Adrenal gland (tissue), 19 donors: ENCODE measurements at regions of chr2 and their contacts with region 1.

Region 1: DNA sequence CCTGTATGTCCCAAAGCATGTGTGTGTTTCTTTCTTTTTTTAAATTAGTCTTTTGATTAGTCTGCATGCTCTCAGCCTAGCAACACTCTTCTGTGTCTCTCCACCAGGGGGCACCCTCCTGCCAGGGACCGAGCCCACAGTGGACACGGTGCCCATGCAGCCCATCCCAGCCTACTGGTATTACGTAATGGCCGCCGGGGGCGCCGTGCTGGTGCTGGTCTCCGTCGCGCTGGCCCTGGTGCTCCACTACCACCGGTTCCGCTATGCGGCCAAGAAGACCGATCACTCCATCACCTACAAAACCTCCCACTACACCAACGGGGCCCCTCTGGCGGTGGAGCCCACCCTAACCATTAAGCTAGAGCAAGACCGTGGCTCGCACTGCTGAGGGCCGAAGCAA is 93.8 kb downstream of the NRP2 start:
- DNase-seq: peak; percentile 53 to 84 (median 57)
- H3K4me3 ChIP-seq: no peak overlapping the region
- H3K27ac ChIP-seq: no peak overlapping the region
- H3K4me1 ChIP-seq: no peaks in the 10 kb centered on the region
- H3K27me3 ChIP-seq: no peaks in the 10 kb centered on the region
- CTCF ChIP-seq: peak; percentile 61 to 77 (median 67)
- POLR2A ChIP-seq: no peak

Region 2: DNA sequence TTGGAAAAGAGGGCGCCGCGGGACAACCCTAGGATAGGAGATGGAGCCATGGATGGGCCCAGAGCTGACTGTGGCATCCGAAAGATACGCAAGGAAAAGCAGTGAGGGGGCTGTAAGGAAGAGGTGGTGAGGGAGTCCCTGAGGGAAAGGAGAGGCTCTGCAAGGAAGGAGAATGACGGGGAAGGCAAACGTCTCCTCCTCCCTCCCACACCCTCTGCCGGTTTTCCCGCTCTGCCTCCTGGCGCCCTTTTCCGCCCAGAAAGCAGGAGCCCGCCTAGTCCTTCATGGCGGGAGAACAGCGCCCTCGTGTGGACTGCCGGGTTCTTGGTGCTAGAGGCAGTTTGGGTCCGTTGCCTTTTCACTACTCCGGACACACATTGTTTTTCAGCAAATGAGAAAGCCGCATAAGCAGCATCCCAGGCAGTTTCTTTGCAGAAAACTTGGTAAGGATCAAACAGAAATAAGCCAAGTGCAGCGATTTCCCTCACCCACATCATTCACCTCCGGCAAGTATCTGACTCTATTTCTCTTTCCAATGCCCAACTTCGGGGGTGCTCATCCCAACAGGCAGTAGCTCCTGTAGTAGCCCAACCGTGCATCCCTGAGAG is 109.5 kb after region 1 on chr2:
- intact Hi-C with region 1: loop called (anchors 5 kb)
- DNase-seq: peak; percentile 86 to 95 (median 90)
- H3K4me3 ChIP-seq: no peak overlapping the region
- H3K27ac ChIP-seq: no peak overlapping the region
- H3K4me1 ChIP-seq: no peaks in the 10 kb centered on the region
- H3K27me3 ChIP-seq: no peaks in the 10 kb centered on the region
- CTCF ChIP-seq: peak; percentile 87 to 97 (median 92)
- POLR2A ChIP-seq: no peak

Region 3: DNA sequence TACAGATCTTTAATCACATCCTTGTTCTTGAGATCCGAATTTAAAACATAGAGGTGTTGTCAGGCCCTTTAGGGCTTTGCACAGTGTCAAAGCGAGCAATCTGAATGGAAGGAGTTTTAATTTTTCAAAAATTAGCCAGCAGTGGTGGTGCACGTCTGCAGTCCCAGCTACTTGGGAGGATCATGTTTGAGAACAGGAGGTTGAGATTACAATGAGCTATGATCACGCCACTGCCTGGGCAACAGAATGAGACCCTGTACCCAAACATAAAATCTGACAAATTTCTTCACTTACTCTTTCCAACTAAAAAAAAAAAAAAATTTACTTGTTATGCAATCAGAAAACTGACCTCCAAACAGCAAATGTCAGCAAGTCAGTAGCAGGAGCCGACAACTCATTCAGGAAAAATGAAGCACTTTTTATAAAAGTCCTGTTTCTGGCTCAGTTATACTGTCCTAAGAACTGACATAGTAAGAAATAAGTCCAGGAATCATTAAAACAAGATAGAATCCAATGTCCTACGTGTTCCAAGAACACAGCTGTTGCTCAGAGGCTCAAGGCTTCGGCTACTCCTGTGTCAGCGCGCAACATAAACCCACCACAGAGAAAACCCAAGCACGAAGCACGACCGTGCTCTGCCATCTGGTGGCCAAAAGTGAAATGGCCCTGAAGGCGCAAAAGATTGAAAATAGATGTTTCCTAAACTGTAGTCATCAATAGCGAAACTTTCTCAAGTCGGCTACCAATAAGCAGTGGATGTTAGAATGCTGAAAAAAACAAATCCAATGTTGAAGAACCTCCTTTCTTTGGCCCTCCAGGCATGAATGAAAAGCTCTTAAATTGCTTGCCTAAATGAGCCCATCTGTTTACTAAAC is 171.7 kb after region 1 on chr2:
- intact Hi-C with region 1: loop called in 1 of 2 experiments (anchors 10 kb)
- DNase-seq: peak; percentile 73 to 90 (median 80)
- H3K4me3 ChIP-seq: peak overlapping the region in 1 of 4 donors; percentile 2
- H3K27ac ChIP-seq: peak overlapping the region in 3 of 5 donors; percentile 24 to 41 (median 37)
- H3K4me1 ChIP-seq: peaks cover 7 to 23% of the 10 kb centered on the region in 2 donors
- H3K27me3 ChIP-seq: no peaks in the 10 kb centered on the region
- CTCF ChIP-seq: peak; percentile 86 to 95 (median 92)
- POLR2A ChIP-seq: no peak